Aorta (tissue), 5 donors: ENCODE measurements at regions of chr1 and their contacts with region 1.

Region 1: DNA sequence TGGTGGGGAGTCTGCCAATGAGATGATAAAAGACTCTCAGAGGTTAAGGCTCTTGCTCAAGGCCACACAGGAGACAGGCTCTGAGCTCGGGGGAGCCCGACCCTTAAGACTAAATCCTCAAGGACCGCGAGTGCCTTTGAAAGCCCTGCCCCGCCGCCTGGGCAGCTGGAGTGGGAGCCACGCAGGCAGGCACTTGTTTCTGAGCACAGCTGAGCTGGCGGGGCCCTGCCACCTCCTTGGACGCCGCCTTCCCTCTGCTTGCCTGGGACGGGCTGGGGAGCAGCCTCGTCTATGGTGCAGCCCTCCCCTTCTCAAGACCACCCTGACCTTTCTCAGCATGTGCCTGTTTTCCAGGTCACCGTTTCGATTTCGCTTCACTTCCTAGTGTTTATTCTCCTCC is 169.3 kb downstream of the CAMTA1 start:
- DNase-seq: no peak
- ATAC-seq: no peak
- H3K4me3 ChIP-seq: no peak overlapping the region
- H3K27ac ChIP-seq: no peak overlapping the region
- H3K4me1 ChIP-seq: no peaks in the 10 kb centered on the region
- H3K27me3 ChIP-seq: no peaks in the 10 kb centered on the region

Region 2: DNA sequence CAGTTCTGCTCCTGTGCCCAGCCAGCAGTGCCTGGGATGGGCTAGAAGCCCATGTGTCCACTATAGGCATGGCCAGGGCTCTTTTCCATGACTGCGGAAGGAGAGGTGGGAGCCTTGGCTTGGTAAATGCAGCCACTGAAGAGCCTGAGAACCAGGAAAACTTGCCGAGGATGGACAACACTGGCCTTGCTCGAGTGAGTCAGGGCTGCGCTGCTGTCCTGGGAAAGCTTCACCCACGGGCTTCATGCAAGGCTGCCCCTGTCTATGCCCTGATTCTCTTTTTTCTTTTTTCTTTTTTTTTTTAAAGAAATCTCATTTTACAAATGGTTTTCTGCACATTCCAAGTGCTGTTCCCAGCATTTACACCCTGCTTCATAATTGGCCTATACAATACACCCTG is 12.8 kb before region 1 on chr1:
- intact Hi-C with region 1: loop called in 1 of 2 experiments (anchors 1 kb)
- DNase-seq: no peak
- ATAC-seq: no peak
- H3K4me3 ChIP-seq: no peak overlapping the region
- H3K27ac ChIP-seq: no peak overlapping the region
- H3K4me1 ChIP-seq: no peaks in the 10 kb centered on the region
- H3K27me3 ChIP-seq: no peaks in the 10 kb centered on the region

Region 3: DNA sequence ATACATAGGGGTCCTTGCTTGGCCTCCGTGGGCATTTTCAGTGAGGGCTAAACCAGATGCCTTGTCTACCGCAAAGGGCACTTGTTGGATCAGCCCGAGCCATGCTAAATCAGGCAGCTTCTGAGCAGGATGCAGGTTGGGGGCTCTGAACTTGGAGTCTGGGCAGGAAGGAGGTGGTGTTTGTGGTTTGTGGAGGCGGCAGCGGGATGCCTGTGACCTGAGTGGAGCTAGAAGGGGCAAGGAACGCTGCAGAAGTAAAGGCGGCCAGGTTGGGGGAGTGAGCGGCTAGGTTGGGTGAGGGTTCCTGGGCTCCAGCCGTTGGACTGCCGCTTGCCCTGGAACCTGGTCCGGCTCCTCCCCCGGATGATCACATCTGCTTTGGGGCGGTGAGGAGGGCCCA is 14.5 kb after region 1 on chr1:
- intact Hi-C with region 1: no loop called
- DNase-seq: peak in 1 of 2 donors; percentile 42
- ATAC-seq: no peak
- H3K4me3 ChIP-seq: no peak overlapping the region
- H3K27ac ChIP-seq: no peak overlapping the region
- H3K4me1 ChIP-seq: no peaks in the 10 kb centered on the region
- H3K27me3 ChIP-seq: no peaks in the 10 kb centered on the region